ENCODE measurements at regions of chr6 and their contacts with region 1.

Region 1: DNA sequence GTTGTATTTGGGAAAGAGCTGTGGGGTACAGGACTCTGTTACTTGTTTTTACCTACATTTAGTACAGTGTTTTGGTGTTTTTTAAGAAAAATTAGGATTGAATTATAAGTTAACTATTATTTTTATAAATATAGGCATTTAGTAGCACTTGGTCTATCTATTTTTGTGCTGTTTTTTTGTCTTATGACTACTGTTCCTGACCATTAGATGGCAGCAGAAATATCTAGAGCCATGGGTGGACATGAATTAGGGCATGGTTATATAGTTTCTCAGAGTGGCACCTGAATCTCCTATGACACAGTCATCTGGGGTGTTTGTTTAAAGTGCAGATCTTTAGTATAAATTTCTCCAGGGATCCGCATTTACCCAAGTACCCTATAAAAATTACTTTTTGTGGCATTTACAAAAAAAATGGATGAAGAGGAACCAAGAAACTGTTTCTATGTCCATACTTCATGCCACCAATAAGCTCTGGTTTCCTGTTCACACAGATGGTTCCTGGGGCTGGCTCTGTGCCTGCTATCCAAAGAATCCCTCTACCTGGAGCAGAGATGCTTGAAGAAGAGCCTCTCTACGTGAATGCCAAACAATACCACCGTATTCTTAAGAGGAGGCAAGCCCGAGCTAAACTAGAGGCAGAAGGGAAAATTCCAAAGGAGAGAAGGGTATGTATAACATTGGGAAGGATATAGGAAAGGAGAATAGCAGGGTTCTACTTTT is 19.8 kb downstream of the NFYA start:
- DNase-seq: no peak
- H3K4me3 ChIP-seq: no peak overlapping the region
- H3K27ac ChIP-seq: no peak overlapping the region
- H3K4me1 ChIP-seq: peaks cover 6% of the 10 kb centered on the region
- H3K27me3 ChIP-seq: no peaks in the 10 kb centered on the region
- CTCF ChIP-seq: peak in 2 of 3 experiments; percentile 28 to 46

Region 2: DNA sequence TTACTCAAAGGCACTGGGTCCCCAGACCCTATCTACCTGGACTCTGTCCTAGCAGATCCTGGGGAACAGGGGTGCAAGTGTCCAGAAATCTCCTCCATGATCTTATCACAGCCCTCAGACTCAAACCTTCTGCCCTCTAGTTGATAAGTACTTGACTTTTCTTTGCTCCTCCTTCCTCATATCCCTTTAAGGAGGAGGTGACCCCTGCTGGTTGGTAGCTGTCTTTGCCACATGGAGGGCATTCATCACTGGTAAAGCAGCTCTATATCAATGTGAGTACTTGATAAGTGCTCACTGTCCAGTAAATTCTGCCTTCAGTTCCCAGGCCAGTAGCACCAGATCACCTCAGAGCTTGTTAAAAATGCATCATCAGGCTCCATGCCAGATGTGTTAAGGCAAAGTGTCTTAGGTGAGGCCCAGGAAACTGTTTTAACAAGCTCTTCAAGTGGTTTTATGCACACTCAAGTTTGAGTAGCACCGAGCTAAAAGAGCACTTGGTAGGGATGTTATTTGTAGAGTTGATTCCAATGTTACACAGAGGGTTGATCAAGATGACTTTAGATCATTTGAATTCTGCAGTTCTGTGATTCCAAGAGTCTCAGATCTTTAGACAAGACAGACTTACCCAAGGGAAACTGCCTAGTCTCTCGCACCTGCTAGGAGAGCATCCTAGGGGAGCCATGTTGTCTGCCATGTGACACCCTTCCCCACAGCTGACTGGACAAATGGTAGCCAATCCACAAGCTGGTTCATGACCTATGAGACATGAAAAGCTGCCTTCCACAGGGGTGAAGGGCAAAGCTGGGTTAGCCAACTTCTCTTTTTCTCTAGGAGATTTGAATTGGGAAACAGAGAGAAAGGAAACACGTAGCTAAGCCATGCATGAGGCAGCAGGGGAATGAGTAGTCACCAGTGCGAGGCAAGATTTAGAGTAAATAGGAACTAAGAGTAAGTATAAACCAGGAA is 89.8 kb after region 1 on chr6:
- dilution Hi-C with region 1: loop called (anchors 25 kb)
- DNase-seq: no peak
- H3K4me3 ChIP-seq: no peak overlapping the region
- H3K27ac ChIP-seq: no peak overlapping the region
- H3K4me1 ChIP-seq: peaks cover 4% of the 10 kb centered on the region
- H3K27me3 ChIP-seq: no peaks in the 10 kb centered on the region
- CTCF ChIP-seq: peak; percentile 85 to 92 (median 88)

Measured in keratinocyte (primary cell).